BJ (cell line): ENCODE measurements at regions of chr1 and their contacts with region 1.

Region 1: GRCh38 chr1:52296345-52296744 is 69.7 kb downstream of the CC2D1B start:
- DNase-seq: no peak
- H3K4me3 ChIP-seq: no peak overlapping the region
- H3K27me3 ChIP-seq: no peaks in the 10 kb centered on the region
- CTCF ChIP-seq: peak; percentile 84

Region 2: GRCh38 chr1:52139817-52140540 is 156.4 kb before region 1 on chr1:
- CTCF ChIA-PET with region 1: interaction called, 10 read pairs
- POLR2A ChIA-PET with region 1: no interaction called
- DNase-seq: no peak
- H3K4me3 ChIP-seq: no peak overlapping the region
- H3K27me3 ChIP-seq: no peaks in the 10 kb centered on the region
- CTCF ChIP-seq: no peak

Region 3: GRCh38 chr1:52306227-52307006 is 10.1 kb after region 1 on chr1:
- CTCF ChIA-PET with region 1: interaction called, 12 read pairs
- POLR2A ChIA-PET with region 1: no interaction called
- DNase-seq: no peak
- H3K4me3 ChIP-seq: no peak overlapping the region
- H3K27me3 ChIP-seq: no peaks in the 10 kb centered on the region
- CTCF ChIP-seq: no peak